Panc1 (cell line): ENCODE measurements at regions of chr7 and their contacts with region 1.

Region 1: GRCh38 chr7:80681272-80681885 is 42.9 kb downstream of the CD36 start:
- DNase-seq: no peak
- ATAC-seq: peak; percentile 93
- H3K4me3 ChIP-seq: no peak overlapping the region
- H3K27ac ChIP-seq: no peak overlapping the region
- H3K4me1 ChIP-seq: no peaks in the 10 kb centered on the region
- H3K27me3 ChIP-seq: no peaks in the 10 kb centered on the region
- CTCF ChIP-seq: peak; percentile 66; the same call in 1 of the 2 replicates

Region 2: GRCh38 chr7:80876873-80877414 is 195.6 kb after region 1 on chr7:
- CTCF ChIA-PET with region 1: no interaction called
- POLR2A ChIA-PET with region 1: interaction called, 11 read pairs
- in situ Hi-C with region 1: no loop called
- intact Hi-C with region 1: no loop called
- DNase-seq: no peak
- ATAC-seq: peak; percentile 85
- H3K4me3 ChIP-seq: no peak overlapping the region
- H3K27ac ChIP-seq: peak overlapping the region; percentile 92
- H3K4me1 ChIP-seq: peaks cover 81% of the 10 kb centered on the region
- H3K27me3 ChIP-seq: no peaks in the 10 kb centered on the region
- CTCF ChIP-seq: peak; percentile 13